BJ (cell line): ENCODE measurements at regions of chr13 and their contacts with region 1.

Region 1: GRCh38 chr13:52968074-52968700 is 60.4 kb upstream of the OLFM4 start:
- DNase-seq: no peak
- H3K4me3 ChIP-seq: no peak overlapping the region
- H3K27me3 ChIP-seq: no peaks in the 10 kb centered on the region
- CTCF ChIP-seq: peak; percentile 99

Region 2: GRCh38 chr13:52665325-52665724 is 302.9 kb before region 1 on chr13:
- CTCF ChIA-PET with region 1: interaction called, 19 read pairs
- POLR2A ChIA-PET with region 1: no interaction called
- DNase-seq: no peak
- H3K4me3 ChIP-seq: no peak overlapping the region
- H3K27me3 ChIP-seq: no peaks in the 10 kb centered on the region
- CTCF ChIP-seq: peak; percentile 54

Region 3: DNA sequence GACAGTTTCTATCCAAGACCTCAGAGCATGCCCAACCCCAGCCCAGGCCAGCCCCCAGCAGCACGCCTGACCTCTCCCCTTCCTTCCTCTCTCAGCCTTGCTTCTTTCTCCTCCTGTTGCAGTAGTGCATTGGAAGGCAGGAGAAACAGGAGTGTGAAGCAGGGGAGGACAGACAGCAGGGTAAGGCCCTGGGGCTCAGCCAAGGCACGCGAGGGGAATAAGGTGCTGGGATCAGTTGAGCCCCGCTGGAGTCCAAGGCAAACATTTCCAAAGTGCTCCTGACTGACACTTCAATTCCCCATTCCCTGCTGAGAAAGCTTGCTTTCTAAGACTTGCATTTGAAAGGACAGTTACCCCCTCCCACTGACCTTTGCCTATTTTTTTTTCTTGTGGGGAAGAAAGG is 12.7 kb before region 1 on chr13:
- CTCF ChIA-PET with region 1: interaction called, 34 read pairs
- POLR2A ChIA-PET with region 1: no interaction called
- DNase-seq: no peak
- H3K4me3 ChIP-seq: no peak overlapping the region
- H3K27me3 ChIP-seq: no peaks in the 10 kb centered on the region; the same call in 1 of the 2 replicates
- CTCF ChIP-seq: no peak

Region 4: DNA sequence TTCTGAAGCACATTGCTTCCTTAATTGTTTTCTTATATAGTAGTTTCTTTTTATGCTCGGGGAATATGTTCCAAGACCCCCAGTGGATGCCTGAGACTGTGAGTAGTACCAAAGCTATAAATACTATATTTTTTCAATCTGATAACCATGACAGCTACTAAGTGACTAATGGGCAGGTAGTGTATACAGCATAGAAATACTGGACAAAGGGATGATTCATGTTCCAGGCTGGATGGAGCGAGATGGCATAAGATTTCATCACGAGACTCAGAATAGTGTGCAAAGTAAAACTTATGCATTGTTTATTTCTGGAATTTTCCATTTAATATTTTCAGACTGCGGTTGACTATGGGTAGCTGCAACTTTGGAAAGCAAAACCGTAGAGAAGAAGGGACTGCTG is 12.5 kb after region 1 on chr13:
- CTCF ChIA-PET with region 1: interaction called, 46 read pairs
- POLR2A ChIA-PET with region 1: no interaction called
- DNase-seq: no peak
- H3K4me3 ChIP-seq: no peak overlapping the region
- H3K27me3 ChIP-seq: no peaks in the 10 kb centered on the region
- CTCF ChIP-seq: no peak

Region 5: GRCh38 chr13:53151336-53152056 is 183.3 kb after region 1 on chr13:
- CTCF ChIA-PET with region 1: interaction called, 31 read pairs
- POLR2A ChIA-PET with region 1: no interaction called
- DNase-seq: no peak
- H3K4me3 ChIP-seq: no peak overlapping the region
- H3K27me3 ChIP-seq: no peaks in the 10 kb centered on the region
- CTCF ChIP-seq: peak; percentile 80

Region 6: DNA sequence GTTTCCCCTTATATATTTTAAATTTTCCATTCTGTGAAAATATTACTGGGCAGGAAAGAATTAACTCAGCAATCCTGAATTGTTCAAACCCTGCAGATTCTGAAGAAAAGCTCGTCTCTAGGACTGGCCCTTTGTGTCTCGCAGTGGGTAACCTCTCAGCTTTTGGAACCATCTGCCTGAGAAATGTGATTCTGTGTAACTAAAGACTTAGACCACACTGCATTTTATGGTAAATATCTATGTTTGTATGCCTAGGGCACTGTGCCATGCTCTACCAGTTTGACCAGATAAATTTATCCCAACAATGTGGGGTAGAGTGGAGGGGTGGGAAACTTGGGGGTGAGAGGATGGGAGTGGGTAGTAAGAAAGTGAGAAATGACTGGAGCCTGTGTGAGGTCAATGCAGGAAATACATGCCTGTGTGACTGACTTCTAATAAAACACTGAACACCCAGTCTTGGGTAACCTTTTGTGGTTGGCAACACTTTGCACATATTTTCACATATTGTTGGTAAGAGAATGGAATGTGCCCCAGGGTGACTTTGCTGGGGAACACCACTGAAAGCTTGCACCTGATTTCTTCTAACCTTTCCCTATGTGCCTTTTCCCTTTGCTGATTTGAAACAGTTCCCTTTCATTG is 1242.3 kb after region 1 on chr13:
- CTCF ChIA-PET with region 1: no interaction called
- POLR2A ChIA-PET with region 1: no interaction called
- DNase-seq: no peak
- H3K4me3 ChIP-seq: no peak overlapping the region
- H3K27me3 ChIP-seq: no peaks in the 10 kb centered on the region
- CTCF ChIP-seq: no peak